CD8-positive, alpha-beta memory T cell (primary cell): ENCODE measurements at regions of chr6 and their contacts with region 1.

Region 1: DNA sequence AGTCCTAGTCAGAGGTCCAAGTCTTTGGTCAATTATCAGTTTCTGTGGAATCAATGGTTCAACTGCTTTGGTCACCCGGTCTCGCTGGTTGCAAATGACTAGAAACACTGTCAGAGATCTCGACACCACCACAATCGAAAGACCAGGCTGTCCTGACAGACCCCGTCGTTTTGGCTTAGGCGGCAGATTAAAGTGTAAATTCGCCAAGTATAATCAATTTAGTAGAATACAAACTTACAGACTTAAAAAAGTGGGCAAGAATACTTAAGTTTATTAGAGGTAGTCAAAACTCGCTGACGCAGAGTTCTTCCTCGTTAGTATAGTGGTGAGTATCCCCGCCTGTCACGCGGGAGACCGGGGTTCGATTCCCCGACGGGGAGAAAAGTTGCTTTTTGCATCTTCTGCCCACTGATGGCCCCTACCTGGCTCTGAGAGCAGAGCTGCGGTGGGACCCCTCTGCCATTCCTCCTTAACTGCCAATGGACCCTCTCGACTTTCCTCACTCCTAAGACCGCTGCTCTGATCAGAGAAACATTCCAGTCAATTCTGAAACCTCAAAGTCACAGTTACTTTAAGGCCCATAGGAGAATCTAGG is 30.6 kb upstream of the ZNF184 start:
- DNase-seq: peak; percentile 65 to 83 (median 77)
- H3K4me3 ChIP-seq: peak overlapping the region; percentile 60
- H3K4me3 Mint-ChIP-seq: peak overlapping the region; percentile 80 to 98 (median 91)
- H3K27ac ChIP-seq: peak overlapping the region; percentile 60
- H3K27ac Mint-ChIP-seq: peak overlapping the region; percentile 63 to 95 (median 86)
- H3K4me1 ChIP-seq: peaks cover 19% of the 10 kb centered on the region
- H3K4me1 Mint-ChIP-seq: peaks cover 36 to 45% (median 39%) of the 10 kb centered on the region in 3 donors
- H3K27me3 ChIP-seq: peaks cover 3% of the 10 kb centered on the region
- H3K27me3 Mint-ChIP-seq: peaks cover 12 to 17% of the 10 kb centered on the region in 2 donors

Region 2: DNA sequence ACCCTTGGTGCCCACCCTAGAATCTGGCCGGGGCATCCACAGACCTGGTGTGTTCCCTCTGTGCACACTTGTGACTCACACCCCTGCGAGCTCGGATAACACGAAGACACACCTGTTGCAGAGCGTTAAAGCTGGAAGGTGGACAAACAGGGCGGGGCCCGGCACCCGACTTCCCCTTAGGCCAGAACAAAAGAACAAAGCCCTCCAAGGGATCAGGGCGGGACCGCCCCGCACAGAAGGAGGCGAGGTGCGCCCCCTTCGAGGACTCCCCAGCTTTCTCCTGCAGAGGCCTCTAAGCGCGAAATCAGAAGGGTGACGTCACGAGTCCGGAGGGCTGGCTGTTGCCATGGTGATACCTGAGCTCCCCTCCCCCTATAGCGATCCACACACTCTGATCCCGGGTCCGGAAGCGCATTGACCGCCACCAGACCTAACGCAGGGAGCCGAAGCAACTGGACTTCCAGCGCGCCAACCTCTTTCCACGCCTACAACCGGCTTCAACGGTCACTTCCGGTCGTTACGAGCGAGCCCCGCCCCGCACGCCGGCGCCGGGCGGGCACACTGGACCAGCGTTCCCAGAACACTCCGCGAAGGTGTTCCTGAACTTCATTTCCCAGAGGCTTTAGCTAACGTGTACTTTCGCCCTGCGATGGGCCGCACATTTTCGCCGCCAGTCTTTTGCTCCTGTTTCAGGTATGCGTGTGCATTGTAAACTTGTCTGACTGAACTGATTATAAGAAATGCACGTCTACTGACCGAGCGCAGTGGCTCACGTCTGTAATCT is 30.7 kb before region 1 on chr6 and contains the start of gene ZNF184:
- CTCF ChIA-PET with region 1: interaction called, 8 read pairs
- POLR2A ChIA-PET with region 1: interaction called, 10 read pairs
- DNase-seq: peak; percentile 71 to 90 (median 88)
- H3K4me3 ChIP-seq: peak within 1 kb of the TSS; percentile 91
- H3K4me3 Mint-ChIP-seq: peak within 1 kb of the TSS; percentile 93 to 99 (median 98)
- H3K27ac ChIP-seq: peak within 1 kb of the TSS; percentile 94
- H3K27ac Mint-ChIP-seq: peak within 1 kb of the TSS; percentile 94 to 99 (median 97)
- H3K4me1 ChIP-seq: peaks cover 23% of the 10 kb centered on the region
- H3K4me1 Mint-ChIP-seq: peaks cover 48 to 51% (median 51%) of the 10 kb centered on the region in 3 donors
- H3K27me3 ChIP-seq: no peaks in the 10 kb centered on the region
- H3K27me3 Mint-ChIP-seq: peaks cover 0 to 7% of the 10 kb centered on the region in 2 donors
- total RNA-seq, gene ZNF184: 9.7 to 10.0 TPM

Region 3: DNA sequence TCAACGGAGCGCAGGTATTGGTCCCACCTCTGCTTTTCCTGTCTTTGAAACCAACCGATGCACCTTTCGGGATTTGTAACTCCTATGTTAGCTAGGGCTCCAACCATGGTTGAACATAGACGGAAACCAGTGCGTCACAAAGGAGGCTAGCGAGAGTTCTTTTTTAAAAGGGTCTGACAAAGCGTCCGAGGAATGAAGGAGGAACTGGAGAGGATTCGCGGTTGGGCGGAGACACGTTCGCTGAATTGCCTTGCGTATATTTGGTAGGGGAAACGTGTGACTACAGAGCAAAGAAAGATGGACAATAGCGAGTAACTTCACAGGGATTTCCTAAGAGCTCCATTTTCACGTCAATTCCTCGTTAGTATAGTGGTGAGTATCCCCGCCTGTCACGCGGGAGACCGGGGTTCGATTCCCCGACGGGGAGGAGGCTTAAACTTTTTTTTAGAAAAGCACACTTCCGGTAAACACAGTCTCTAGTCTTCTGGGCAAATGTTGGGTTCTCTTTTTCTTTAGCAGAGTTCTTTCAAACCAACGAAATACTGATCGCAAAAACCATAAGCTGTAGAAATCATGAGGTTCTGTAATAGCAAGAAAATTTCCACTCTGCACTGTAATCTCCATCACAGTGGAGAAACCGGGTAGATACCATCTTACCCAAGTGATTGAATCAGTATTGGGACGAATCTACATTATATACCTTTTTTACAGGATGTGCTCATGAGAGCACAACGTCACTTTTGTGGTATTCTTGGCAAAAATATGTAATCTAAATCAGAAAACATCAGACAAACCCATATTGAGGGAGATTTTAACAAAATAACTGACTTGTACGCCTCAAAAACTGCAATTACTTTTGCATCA is 24.0 kb before region 1 on chr6:
- CTCF ChIA-PET with region 1: interaction called, 8 read pairs
- POLR2A ChIA-PET with region 1: interaction called, 23 read pairs
- DNase-seq: peak; percentile 75 to 92 (median 87)
- H3K4me3 ChIP-seq: peak overlapping the region; percentile 77
- H3K4me3 Mint-ChIP-seq: no peak overlapping the region
- H3K27ac ChIP-seq: peak overlapping the region; percentile 98
- H3K27ac Mint-ChIP-seq: no peak overlapping the region
- H3K4me1 ChIP-seq: peaks cover 17% of the 10 kb centered on the region
- H3K4me1 Mint-ChIP-seq: peaks cover 0 to 8% (median 4%) of the 10 kb centered on the region in 3 donors
- H3K27me3 ChIP-seq: no peaks in the 10 kb centered on the region
- H3K27me3 Mint-ChIP-seq: no peaks in the 10 kb centered on the region

Region 4: DNA sequence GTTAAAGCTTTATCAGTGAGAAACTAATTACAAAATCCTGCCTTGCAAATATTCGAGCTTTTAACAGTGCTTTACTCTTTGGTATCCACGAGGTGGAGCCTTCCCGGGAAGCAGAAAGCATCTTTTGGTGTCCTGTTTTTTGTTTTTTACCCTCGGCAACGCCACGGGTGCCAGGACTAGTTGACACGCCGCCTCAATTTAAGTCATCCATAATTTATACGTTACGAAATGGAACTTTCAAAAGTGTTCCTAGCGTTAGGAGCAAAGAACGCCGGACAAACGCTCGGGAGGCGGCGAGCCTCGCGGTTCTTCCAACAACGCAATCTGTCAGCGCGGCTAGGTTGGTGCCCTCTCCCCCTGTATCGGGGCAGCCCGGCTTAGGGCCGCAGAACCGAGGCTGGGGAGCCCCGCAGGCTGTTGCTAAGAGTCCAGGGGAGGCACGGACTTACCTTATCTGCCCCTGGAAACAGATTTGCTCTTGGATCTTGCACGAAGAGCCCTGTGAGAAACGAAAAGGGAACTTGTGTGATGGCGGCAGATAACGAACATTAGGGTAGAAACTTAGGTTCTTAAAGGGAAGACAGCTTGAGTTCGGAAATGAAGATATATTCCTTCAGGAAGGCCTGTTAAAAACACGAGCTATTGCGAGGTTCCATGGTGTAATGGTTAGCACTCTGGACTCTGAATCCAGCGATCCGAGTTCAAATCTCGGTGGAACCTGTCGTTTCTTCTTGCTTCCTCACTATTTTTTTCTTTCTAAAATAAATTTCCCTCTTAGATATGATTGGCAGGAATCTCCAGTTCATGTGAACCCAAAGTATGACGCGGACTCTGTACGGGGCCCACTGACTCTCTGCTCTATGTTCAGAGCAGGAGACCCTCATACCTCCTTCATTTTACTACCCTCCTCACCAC is 15.6 kb after region 1 on chr6:
- CTCF ChIA-PET with region 1: interaction called, 22 read pairs
- POLR2A ChIA-PET with region 1: interaction called, 4 read pairs
- DNase-seq: peak; percentile 21 to 71 (median 58)
- H3K4me3 ChIP-seq: peak overlapping the region; percentile 75
- H3K4me3 Mint-ChIP-seq: peak overlapping the region; percentile 83 to 99 (median 86)
- H3K27ac ChIP-seq: peak overlapping the region; percentile 85
- H3K27ac Mint-ChIP-seq: peak overlapping the region; percentile 53 to 95 (median 77)
- H3K4me1 ChIP-seq: peaks cover 7% of the 10 kb centered on the region
- H3K4me1 Mint-ChIP-seq: peaks cover 13 to 25% (median 21%) of the 10 kb centered on the region in 3 donors
- H3K27me3 ChIP-seq: no peaks in the 10 kb centered on the region
- H3K27me3 Mint-ChIP-seq: peaks cover 12 to 28% of the 10 kb centered on the region in 2 donors